ENCODE measurements at regions of chr7 and their contacts with region 1.

Region 1: DNA sequence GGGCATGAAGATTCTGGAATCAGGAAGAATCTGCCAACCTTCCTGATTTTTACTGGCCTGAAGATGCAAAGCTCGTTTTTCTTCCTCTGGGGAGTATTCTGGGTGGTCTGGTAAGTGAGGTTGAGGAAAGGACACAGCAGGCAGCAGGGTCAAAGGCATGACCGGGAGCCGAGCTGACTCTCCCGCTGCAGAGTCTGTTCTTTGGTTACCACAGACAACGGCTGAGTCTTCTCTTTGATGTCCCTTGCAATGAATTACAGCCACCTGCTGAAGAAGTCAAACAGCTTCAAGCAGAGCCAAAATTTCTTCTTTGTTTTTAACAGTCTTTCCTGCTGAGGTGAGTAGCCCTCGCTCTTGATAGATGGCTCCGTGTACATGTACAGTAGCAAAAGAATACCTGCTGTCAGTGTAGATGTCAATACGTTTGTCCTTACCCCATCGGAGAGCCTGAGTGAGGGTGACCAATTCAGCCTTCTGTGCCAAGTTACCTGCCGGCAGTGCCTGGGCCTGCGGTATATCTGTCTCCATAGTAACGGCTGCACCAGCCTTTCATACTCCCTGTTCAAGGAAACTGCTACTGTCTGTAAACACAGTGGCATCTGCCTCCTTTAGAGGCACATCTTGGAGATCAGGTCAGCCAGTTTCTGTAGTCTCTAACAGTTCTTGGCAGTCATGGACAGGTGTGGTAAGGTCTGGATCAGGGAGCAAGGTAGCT is 76.4 kb downstream of the PRR15 start:
- DNase-seq: no peak
- H3K4me3 Mint-ChIP-seq: no peak overlapping the region
- H3K27ac Mint-ChIP-seq: no peak overlapping the region
- H3K4me1 Mint-ChIP-seq: peaks cover 25% of the 10 kb centered on the region
- H3K27me3 Mint-ChIP-seq: no peaks in the 10 kb centered on the region
- CTCF ChIP-seq: no peak

Region 2: DNA sequence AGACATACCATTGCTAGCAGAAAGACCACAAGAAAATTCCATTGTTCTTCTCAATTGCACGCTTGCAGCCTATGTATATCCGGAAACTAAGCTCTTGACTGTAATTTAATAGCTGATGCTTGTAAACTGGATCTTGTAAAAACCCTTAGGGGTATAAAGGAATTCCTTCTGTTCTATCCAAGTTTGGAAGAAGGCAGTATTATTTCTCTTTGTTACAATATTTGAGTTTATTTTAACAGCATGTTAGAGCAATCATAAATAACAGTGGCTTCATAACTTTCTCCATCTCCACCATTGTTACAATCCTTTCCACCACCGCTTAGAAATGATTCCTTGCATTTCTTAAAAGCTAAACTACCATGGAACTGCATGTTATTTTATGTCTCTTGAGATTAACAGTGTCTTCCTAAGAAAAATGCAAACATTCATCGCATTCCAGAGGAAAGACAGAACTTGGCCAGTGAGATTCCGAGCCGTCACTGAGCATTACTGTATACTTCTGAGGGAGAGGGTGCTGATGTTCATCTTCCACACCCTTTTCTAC is 774.4 kb before region 1 on chr7:
- CTCF ChIA-PET with region 1: no interaction called
- intact Hi-C with region 1: no loop called
- DNase-seq: no peak
- H3K4me3 Mint-ChIP-seq: no peak overlapping the region
- H3K27ac Mint-ChIP-seq: no peak overlapping the region
- H3K4me1 Mint-ChIP-seq: no peaks in the 10 kb centered on the region
- H3K27me3 Mint-ChIP-seq: no peaks in the 10 kb centered on the region
- CTCF ChIP-seq: no peak

Region 3: GRCh38 chr7:29748286-29749108 is 108.5 kb after region 1 on chr7:
- CTCF ChIA-PET with region 1: interaction called, 18 read pairs
- intact Hi-C with region 1: loop called (anchors 2 kb)
- DNase-seq: peak; percentile 22
- H3K4me3 Mint-ChIP-seq: no peak overlapping the region
- H3K27ac Mint-ChIP-seq: no peak overlapping the region
- H3K4me1 Mint-ChIP-seq: peaks cover 14% of the 10 kb centered on the region
- H3K27me3 Mint-ChIP-seq: peaks cover 20% of the 10 kb centered on the region
- CTCF ChIP-seq: peak; percentile 19

Region 4: GRCh38 chr7:29806208-29806994 is 166.4 kb after region 1 on chr7 and contains the start of gene WIPF3:
- CTCF ChIA-PET with region 1: interaction called, 3 read pairs
- intact Hi-C with region 1: loop called (anchors 2 kb)
- DNase-seq: peak; percentile 76
- H3K4me3 Mint-ChIP-seq: peak within 1 kb of the TSS; percentile 68
- H3K27ac Mint-ChIP-seq: no peak within 1 kb of the TSS
- H3K4me1 Mint-ChIP-seq: no peaks in the 10 kb centered on the region
- H3K27me3 Mint-ChIP-seq: peaks cover 57% of the 10 kb centered on the region
- CTCF ChIP-seq: no peak
- total RNA-seq, gene WIPF3: 4.9 and 6.4 TPM in 2 replicates